ENCODE measurements at regions of chr5 and their contacts with region 1.

Region 1: GRCh38 chr5:151447174-151448037 is at the start of gene SLC36A1:
- DNase-seq: peak; percentile 96
- ATAC-seq: peak; percentile 94 to 98
- total RNA-seq, gene SLC36A1: 5.9 to 8.1 TPM

Region 2: GRCh38 chr5:151499501-151500035 is 52.2 kb after region 1 on chr5:
- intact Hi-C with region 1: loop called (anchors 1 to 5 kb)
- DNase-seq: no peak
- ATAC-seq: peak; percentile 33 to 39

Region 3: GRCh38 chr5:151550146-151550545 is 102.7 kb after region 1 on chr5:
- intact Hi-C with region 1: no loop called
- DNase-seq: no peak
- ATAC-seq: no peak

Region 4: GRCh38 chr5:151651997-151652645 is 204.7 kb after region 1 on chr5:
- intact Hi-C with region 1: loop called (anchors 1 to 10 kb)
- DNase-seq: peak; percentile 83
- ATAC-seq: peak; percentile 93 to 96

Region 5: GRCh38 chr5:151659001-151659754 is 211.8 kb after region 1 on chr5:
- intact Hi-C with region 1: loop called in 1 of 2 experiments (anchors 10 kb)
- DNase-seq: peak; percentile 84
- ATAC-seq: peak; percentile 80 to 83

Region 6: GRCh38 chr5:151740336-151740942 is 293.0 kb after region 1 on chr5:
- intact Hi-C with region 1: loop called in 1 of 2 experiments (anchors 5 kb)
- DNase-seq: peak; percentile 73
- ATAC-seq: peak; percentile 70 to 88

Measured in left cardiac atrium (tissue), 4 donors.